CD4-positive, alpha-beta memory T cell (primary cell): ENCODE measurements at regions of chr1 and their contacts with region 1.

Region 1: GRCh38 chr1:161749509-161750407 is at the start of gene DUSP12:
- DNase-seq: peak; percentile 84 to 90 (median 86)
- H3K4me3 ChIP-seq: peak within 1 kb of the TSS; percentile 91 to 96
- H3K4me3 Mint-ChIP-seq: peak within 1 kb of the TSS; percentile 99 to 100 (median 99)
- H3K27ac ChIP-seq: peak within 1 kb of the TSS; percentile 75
- H3K27ac Mint-ChIP-seq: peak within 1 kb of the TSS; percentile 95 to 98 (median 96)
- H3K4me1 ChIP-seq: peaks cover 19% of the 10 kb centered on the region
- H3K4me1 Mint-ChIP-seq: peaks cover 18 to 35% (median 27%) of the 10 kb centered on the region in 4 donors
- H3K27me3 ChIP-seq: no peaks in the 10 kb centered on the region
- H3K27me3 Mint-ChIP-seq: peaks cover 1 to 6% of the 10 kb centered on the region in 2 donors
- total RNA-seq, gene DUSP12: 30.4 to 31.6 TPM

Region 2: GRCh38 chr1:161531986-161532643 is 217.6 kb before region 1 on chr1:
- CTCF ChIA-PET with region 1: interaction called, 5 read pairs
- POLR2A ChIA-PET with region 1: interaction called, 15 read pairs
- intact Hi-C with region 1: no loop called
- DNase-seq: no peak
- H3K4me3 ChIP-seq: no peak overlapping the region
- H3K4me3 Mint-ChIP-seq: peak overlapping the region in 4 of 8 donors; percentile 51 to 58 (median 54)
- H3K27ac ChIP-seq: no peak overlapping the region
- H3K27ac Mint-ChIP-seq: peak overlapping the region in 1 of 7 donors; percentile 78
- H3K4me1 ChIP-seq: peaks cover 10% of the 10 kb centered on the region
- H3K4me1 Mint-ChIP-seq: peaks cover 2 to 25% (median 9%) of the 10 kb centered on the region in 4 donors
- H3K27me3 ChIP-seq: no peaks in the 10 kb centered on the region
- H3K27me3 Mint-ChIP-seq: peaks cover 0 to 15% of the 10 kb centered on the region in 2 donors

Region 3: DNA sequence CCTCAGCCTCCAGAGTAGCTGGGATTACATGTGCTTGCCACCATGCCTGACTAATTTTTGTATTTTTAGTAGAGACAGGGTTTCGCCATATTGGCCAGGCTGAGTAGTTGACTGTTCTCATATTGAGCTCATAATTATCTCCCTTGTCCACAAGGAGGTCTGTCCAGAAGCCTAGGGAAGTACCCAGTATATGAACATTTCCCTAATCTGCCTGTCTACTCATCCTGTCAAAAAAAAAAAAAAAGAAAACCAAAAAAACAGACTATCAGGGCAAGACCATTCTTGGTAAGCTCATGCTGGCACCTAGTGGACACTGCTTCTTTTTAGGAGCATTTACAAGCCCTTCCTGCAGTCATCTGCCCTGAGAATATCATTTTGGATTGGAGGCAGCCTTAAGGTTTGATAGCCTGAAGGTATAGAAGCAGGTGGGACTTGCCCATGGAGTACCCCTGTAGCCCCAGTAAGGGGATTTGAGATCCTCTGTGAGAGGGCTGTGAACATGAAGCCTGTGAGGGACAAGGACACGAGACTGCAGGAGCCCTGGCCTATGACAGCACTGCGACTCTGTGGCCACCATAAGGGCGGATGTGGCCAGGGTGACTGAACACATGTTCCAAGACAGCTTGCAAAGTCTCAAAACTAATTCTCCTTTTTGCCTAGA is 11.0 kb before region 1 on chr1:
- CTCF ChIA-PET with region 1: interaction called, 15 read pairs
- POLR2A ChIA-PET with region 1: interaction called, 19 read pairs
- intact Hi-C with region 1: no loop called
- DNase-seq: peak; percentile 49 to 66 (median 55)
- H3K4me3 ChIP-seq: no peak overlapping the region
- H3K4me3 Mint-ChIP-seq: peak overlapping the region in 4 of 8 donors; percentile 11 to 61 (median 36)
- H3K27ac ChIP-seq: no peak overlapping the region
- H3K27ac Mint-ChIP-seq: peak overlapping the region; percentile 25 to 65 (median 37)
- H3K4me1 ChIP-seq: peaks cover 22% of the 10 kb centered on the region
- H3K4me1 Mint-ChIP-seq: peaks cover 3 to 30% (median 22%) of the 10 kb centered on the region in 4 donors
- H3K27me3 ChIP-seq: no peaks in the 10 kb centered on the region
- H3K27me3 Mint-ChIP-seq: no peaks in the 10 kb centered on the region

Region 4: GRCh38 chr1:161816201-161816600 is 66.4 kb after region 1 on chr1:
- CTCF ChIA-PET with region 1: no interaction called
- POLR2A ChIA-PET with region 1: no interaction called
- intact Hi-C with region 1: no loop called
- DNase-seq: no peak
- H3K4me3 ChIP-seq: no peak overlapping the region
- H3K4me3 Mint-ChIP-seq: no peak overlapping the region
- H3K27ac ChIP-seq: no peak overlapping the region
- H3K27ac Mint-ChIP-seq: peak overlapping the region in 1 of 7 donors; percentile 47
- H3K4me1 ChIP-seq: no peaks in the 10 kb centered on the region
- H3K4me1 Mint-ChIP-seq: peaks cover 0 to 10% (median 4%) of the 10 kb centered on the region in 4 donors
- H3K27me3 ChIP-seq: no peaks in the 10 kb centered on the region
- H3K27me3 Mint-ChIP-seq: no peaks in the 10 kb centered on the region